ENCODE measurements at regions of chr16 and their contacts with region 1.

Region 1: DNA sequence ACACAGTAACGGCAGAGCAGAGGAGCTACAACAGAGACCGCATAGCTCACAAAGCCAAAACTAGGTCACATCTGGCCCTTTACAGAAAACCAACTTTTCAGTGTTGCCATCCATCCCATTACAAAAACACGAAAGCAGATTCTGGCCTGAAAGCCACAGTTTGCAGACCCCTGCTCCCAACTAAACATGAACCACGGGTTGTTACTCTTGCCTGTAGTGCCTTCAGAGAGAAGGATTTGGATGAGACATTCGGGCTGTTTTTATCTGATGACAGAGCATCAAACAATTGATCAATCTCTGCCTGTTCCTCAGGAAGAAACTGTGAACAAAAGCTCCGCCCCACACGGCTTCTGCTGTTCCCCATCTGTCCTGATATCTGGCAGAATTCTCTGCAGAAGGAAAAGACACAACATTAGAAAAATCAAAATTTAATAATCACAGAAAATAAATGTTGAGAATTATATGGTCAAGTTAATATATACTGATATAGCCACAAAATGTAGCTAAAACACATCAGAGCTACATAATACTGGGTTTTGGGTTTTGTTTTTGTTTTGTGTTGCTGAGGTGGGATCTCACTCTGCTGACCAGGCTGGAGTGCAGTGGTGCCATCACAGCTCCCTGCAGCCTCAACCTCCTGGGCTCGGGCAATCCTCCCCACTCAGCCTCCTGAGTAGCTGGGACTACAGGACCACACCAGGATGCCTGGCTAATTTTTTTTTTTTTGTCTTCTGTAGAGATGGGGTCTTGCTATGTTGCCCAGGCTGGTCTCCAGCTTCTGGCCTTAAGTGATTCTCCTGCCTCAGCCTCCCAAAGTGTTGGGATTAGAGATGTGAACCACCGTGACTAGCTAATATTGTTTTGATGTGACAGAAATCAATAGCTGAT is 6.5 kb downstream of the MEAK7 start:
- DNase-seq: no peak
- H3K4me3 ChIP-seq: no peak overlapping the region
- H3K27me3 ChIP-seq: no peaks in the 10 kb centered on the region
- CTCF ChIP-seq: no peak

Region 2: DNA sequence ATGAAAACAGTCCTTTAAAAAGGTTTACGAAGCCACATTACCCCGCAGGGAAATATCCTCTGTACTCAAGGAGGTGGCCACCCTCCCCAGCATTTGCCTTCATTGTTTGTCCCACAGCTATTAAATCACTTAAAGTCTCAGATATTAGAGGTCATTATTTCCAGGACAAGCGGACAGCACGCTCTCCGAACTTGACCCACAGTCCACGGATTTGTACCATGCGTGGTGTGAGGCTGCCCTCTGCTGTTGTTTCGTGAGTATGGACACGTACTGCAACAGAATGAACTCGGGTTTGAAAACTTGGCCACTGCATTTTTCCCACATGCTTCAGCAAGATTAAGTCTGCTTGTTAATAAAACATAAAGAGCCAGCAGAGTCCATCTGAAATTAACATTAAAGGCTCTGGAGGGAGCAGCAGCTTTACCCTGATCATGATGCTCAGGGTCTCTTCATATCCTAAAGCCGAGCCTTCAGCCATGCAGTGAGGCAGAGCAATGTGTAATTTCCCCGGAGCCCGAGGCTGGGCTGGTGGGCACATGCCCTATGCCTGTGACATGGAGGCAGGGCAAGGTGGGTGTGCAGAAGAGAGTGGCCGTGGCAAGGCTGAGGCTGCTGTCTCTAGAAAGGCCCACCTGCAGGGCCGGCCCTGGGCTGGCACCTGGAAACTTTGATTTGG is 13.2 kb before region 1 on chr16:
- CTCF ChIA-PET with region 1: interaction called, 18 read pairs
- POLR2A ChIA-PET with region 1: no interaction called
- DNase-seq: no peak
- H3K4me3 ChIP-seq: no peak overlapping the region
- H3K27me3 ChIP-seq: no peaks in the 10 kb centered on the region
- CTCF ChIP-seq: peak; percentile 74